Ascending aorta (tissue), 2 donors: ENCODE measurements at regions of chr3 and their contacts with region 1.

Region 1: GRCh38 chr3:169227911-169228310 is 435.6 kb downstream of the MECOM start:
- DNase-seq: no peak
- H3K4me3 ChIP-seq: peak overlapping the region in 1 of 2 donors; percentile 30
- H3K27ac ChIP-seq: peak overlapping the region; percentile 42 to 60
- H3K4me1 ChIP-seq: peaks cover 3 to 29% of the 10 kb centered on the region in 2 donors
- H3K27me3 ChIP-seq: no peaks in the 10 kb centered on the region
- CTCF ChIP-seq: no peak

Region 2: DNA sequence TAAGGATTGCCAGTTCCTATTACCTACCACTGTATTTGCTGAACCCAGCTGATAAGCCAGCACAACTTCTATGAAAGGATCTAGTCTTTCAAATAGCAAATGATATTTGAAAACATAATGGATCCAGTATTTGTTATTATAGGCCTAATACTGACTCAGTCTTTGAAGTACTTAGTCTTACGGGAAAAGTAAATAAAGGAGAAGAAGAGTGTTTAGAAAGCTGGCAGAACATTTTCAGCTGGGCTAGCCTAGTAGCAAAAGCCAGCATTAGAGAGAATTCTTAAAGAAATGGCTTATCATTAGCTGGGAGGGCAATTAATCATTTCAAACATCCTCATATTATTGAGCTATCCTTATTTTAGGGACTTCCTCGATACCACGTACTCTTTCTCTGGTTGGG is 1030.7 kb before region 1 on chr3:
- intact Hi-C with region 1: no loop called
- DNase-seq: no peak
- H3K4me3 ChIP-seq: no peak overlapping the region
- H3K27ac ChIP-seq: no peak overlapping the region
- H3K4me1 ChIP-seq: no peaks in the 10 kb centered on the region
- H3K27me3 ChIP-seq: no peaks in the 10 kb centered on the region
- CTCF ChIP-seq: no peak

Region 3: GRCh38 chr3:169295126-169295525 is 67.2 kb after region 1 on chr3:
- intact Hi-C with region 1: loop called (anchors 5 kb)
- DNase-seq: no peak
- H3K4me3 ChIP-seq: no peak overlapping the region
- H3K27ac ChIP-seq: no peak overlapping the region
- H3K4me1 ChIP-seq: no peaks in the 10 kb centered on the region
- H3K27me3 ChIP-seq: no peaks in the 10 kb centered on the region
- CTCF ChIP-seq: peak; percentile 5 to 39 (median 19)

Region 4: DNA sequence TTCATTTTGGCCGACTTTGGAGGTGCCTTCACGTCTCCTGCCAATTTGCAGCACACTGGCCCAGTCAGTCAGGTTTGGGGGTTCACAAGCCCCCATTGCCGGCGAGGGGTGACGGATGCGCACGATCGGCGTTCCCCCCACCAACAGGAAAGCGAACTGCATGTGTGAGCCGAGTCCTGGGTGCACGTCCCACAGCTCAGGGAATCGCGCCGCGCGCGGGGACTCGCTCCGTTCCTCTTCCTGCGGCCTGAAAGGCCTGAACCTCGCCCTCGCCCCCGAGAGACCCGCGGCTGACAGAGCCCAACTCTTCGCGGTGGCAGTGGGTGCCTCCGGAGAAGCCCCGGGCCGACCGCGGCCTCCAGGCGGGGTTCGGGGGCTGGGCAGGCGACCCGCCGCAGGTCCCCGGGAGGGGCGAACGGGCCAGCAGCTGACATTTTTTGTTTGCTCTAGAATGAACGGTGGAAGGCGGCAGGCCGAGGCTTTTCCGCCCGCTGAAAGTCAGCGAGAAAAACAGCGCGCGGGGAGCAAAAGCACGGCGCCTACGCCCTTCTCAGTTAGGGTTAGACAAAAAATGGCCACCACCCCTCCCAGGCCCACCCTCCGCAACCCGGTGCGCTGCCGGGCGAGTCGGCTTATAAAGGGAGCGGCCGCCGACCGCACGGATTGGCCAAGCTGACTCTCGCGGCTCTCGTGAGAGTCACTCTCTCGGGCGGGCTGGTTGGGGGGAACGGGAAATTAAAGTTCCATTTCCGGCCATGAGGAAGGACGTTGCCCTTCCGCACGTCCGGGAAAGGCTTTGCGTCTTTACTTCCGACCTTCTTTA is 536.8 kb after region 1 on chr3 and contains the start of gene TERC:
- intact Hi-C with region 1: loop called (anchors 10 kb)
- DNase-seq: peak; percentile 77 to 98
- H3K4me3 ChIP-seq: peak within 1 kb of the TSS; percentile 75 to 83
- H3K27ac ChIP-seq: peak within 1 kb of the TSS; percentile 96 to 97
- H3K4me1 ChIP-seq: peaks cover 3 to 8% of the 10 kb centered on the region in 2 donors
- H3K27me3 ChIP-seq: no peaks in the 10 kb centered on the region
- CTCF ChIP-seq: no peak
- total RNA-seq, gene TERC: 260 TPM